Psoas muscle (tissue), 8 donors: ENCODE measurements at regions of chr3 and their contacts with region 1.

Region 1: DNA sequence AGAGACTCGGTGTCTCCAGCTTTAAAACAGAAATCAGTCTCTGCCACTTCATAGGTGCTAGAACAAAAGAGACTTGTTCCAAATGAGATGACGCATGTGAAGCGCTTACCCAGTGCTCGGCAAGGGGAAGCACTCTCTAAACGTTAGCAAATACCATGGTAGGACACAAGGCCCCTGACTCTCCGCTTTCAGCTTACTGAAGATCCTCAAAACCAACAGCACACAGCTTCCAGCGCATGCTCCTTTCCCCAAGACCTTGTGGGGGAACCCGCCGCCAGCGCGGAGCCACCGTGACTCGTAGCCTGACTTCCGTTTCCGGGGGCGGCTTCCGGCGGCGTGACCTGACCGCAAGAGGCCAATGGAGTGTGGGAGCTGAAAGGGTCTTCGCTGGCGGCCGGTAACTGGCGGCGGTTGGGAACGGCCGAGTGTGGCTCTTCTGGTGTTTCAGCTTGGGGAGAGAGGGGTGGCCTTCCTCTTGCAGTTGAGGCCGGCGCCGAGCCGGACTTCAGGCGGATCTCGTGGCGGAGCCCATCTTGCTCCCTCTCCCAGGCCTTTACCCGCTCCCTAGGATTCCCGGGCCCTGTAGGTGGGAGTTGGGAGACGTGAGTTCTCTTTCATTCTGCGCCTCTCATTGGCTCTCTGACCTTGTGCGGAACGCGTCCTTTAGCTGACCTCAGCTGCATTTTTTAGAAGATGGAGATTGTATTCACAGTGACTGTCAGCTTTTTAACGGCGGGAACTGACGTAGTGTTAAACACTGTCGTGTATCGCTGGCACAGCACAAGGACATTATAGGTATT is at the start of gene THUMPD3:
- DNase-seq: peak; percentile 94 to 96
- ATAC-seq: peak; percentile 98 to 100 (median 99)
- H3K4me3 ChIP-seq: peak within 1 kb of the TSS; percentile 82
- H3K27ac ChIP-seq: peak within 1 kb of the TSS; percentile 92
- H3K4me1 ChIP-seq: peaks cover 22% of the 10 kb centered on the region
- H3K27me3 ChIP-seq: no peaks in the 10 kb centered on the region
- CTCF ChIP-seq: no peak
- total RNA-seq, gene THUMPD3: 40.0 to 57.7 (median 52.9) TPM

Region 2: GRCh38 chr3:9396700-9397521 is 34.0 kb after region 1 on chr3:
- intact Hi-C with region 1: loop called in 1 of 2 experiments (anchors 5 kb)
- DNase-seq: peak; percentile 99 to 100
- ATAC-seq: peak; percentile 81 to 85 (median 82)
- H3K4me3 ChIP-seq: peak overlapping the region; percentile 96
- H3K27ac ChIP-seq: peak overlapping the region; percentile 100
- H3K4me1 ChIP-seq: peaks cover 64% of the 10 kb centered on the region
- H3K27me3 ChIP-seq: no peaks in the 10 kb centered on the region
- CTCF ChIP-seq: no peak

Region 3: DNA sequence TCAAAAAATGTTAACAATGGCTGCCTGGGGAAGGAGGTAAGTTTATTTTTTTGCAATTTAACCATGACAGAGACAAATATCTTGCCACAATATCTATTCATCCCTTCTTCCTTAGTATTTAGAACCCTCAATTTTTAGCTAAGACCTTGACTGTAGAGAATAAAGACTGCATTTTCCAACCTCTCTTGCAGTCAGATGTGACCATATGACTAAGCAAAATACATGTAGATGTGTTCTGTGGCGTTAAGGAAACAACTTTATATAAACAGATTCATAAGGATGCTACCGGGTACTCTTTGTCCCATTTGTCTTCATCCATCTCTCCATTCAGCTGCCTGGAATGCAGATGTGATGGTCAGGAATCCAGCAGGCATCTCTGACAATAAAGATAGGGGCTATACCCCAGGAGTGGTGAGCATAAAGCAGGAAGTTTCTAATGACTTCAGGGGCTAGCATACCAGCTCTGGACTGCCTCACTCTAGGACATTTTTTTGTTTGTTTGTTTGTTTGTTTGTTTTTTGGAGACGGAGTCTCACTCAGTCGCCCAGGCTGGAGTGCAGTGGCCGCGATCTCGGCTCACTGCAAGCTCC is 149.6 kb after region 1 on chr3:
- intact Hi-C with region 1: no loop called
- DNase-seq: no peak
- ATAC-seq: no peak
- H3K4me3 ChIP-seq: no peak overlapping the region
- H3K27ac ChIP-seq: no peak overlapping the region
- H3K4me1 ChIP-seq: no peaks in the 10 kb centered on the region
- H3K27me3 ChIP-seq: peaks cover 0 to 17% (median 9%) of the 10 kb centered on the region in 3 donors
- CTCF ChIP-seq: no peak

Region 4: DNA sequence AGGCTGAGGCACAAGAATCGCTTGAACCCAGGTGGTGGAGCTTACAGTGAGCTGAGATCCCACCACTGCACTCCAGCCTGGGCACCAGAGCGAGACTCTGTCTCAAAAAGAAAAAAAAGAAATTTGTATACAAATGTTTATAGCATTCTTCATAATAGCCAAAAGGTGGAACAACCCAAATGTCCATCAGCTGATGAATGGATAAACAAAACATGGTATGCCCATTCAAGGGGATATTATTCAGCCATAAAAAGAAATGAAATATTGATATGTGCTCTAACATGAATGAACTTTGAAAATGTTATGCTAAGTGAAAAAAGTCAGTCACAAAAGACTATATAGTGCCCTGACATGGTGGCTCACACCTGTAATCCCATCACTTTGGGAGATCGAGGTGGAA is 179.3 kb after region 1 on chr3:
- intact Hi-C with region 1: no loop called
- DNase-seq: no peak
- ATAC-seq: no peak
- H3K4me3 ChIP-seq: no peak overlapping the region
- H3K27ac ChIP-seq: no peak overlapping the region
- H3K4me1 ChIP-seq: no peaks in the 10 kb centered on the region
- H3K27me3 ChIP-seq: peaks cover 0 to 7% (median 0%) of the 10 kb centered on the region in 3 donors
- CTCF ChIP-seq: no peak